Calu3 (cell line): ENCODE measurements at regions of chr17 and their contacts with region 1.

Region 1: DNA sequence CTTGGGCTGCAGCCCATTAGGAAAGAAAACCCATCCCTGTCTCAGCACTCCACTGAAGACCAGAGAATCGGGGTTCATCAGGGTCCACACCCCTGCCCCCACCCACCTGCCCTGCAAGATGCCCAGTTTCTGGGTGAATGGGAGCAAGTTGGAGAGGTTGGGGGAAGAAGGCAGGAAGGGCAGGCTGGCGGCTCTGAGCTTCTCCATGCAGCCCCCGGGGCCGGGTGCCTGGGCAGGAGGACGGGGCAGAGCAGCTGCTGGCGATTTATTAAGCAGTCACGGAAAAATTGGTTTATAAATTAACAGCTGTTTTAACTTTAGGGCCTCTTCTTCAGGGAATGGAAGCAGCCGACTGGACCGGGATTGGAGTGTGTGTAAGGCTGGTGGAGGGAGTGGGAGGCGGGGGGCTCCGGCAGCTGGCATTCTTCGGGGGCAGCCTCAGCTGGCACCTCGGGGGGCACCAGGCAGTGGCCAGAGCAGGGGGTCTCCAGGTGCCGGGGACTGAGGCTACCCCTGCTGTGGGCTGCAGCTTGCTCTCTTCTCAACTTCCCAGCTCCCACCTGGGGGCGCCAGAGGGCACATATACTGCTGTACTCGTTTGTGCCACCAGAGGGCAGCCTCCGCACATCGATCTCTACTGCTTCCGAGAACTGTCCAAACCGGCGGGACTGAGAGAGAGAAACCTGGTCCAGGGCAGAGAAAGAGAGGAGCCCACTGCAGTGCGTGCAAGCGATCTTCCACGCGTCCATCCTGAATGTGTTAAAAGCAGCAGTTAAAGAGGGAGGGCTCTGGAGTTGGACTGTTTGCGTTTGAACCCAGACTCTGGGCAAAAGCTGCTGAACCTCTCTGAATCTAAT is 5.0 kb upstream of the PPP1R1B start:
- DNase-seq: peak; percentile 100
- H3K4me3 Mint-ChIP-seq: peak overlapping the region; percentile 18
- H3K27ac Mint-ChIP-seq: peak overlapping the region; percentile 3
- H3K4me1 Mint-ChIP-seq: peaks cover 55% of the 10 kb centered on the region
- H3K27me3 Mint-ChIP-seq: peaks cover 83% of the 10 kb centered on the region
- CTCF ChIP-seq: no peak

Region 2: DNA sequence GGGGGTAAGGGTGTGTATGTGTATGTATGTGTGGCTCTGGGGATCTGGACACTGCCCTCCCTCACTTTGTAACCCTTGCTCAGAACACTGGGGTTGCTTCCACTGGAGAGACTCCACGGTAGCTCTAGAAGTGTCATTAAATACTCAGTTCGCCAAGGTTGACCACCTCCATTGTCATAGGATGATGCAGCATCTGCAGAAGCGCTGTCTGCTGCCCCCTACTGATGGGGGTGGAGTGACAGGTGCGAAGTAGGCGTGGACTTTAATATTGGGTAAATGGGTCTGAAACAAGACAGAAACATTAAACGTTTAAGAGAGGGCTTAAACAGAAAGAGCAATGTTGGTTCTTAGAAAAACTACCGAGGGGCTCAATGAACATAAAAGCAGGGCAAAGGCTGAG is 360.5 kb before region 1 on chr17:
- CTCF ChIA-PET with region 1: no interaction called
- intact Hi-C with region 1: no loop called
- DNase-seq: peak; percentile 70
- H3K4me3 Mint-ChIP-seq: no peak overlapping the region
- H3K27ac Mint-ChIP-seq: no peak overlapping the region
- H3K4me1 Mint-ChIP-seq: no peaks in the 10 kb centered on the region
- H3K27me3 Mint-ChIP-seq: no peaks in the 10 kb centered on the region
- CTCF ChIP-seq: peak; percentile 86

Region 3: DNA sequence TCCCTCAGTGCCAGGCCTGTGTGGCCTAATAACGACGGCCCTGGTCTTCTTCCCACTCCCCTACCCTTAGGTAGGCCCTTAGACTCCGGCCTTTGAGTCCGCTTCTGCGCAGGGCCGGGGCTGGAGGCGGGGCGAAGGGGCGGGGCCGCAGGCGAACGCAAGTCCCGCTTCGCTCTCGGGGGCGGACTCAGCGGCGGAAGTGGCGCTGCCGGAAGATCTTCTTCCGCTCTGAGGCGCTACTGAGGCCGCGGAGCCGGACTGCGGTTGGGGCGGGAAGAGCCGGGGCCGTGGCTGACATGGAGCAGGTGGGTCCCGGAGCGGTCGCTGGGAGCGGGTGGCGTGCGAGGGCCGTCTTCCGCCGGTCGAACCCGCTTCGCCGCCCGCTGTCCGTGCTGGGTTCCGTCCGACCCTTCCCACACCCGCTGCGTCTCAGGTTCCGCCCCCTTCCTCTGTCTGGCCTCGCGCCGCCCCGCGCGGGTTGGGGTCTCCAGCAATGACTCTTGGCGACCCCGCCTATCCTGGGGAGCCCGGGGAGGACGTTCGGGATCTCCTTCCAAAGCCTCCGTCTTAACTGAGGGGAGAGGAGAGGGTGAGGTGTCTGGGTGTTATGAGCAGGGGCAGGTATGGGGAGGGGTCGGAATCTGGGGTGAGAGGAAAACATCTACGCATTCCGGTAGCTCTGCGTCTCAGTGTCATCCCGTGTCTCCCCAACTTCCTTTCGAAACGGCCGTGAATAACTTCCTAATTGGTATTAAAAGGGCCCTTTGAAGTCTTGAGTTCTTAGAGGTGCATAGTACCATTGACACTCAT is 15.4 kb after region 1 on chr17 and contains the start of gene STARD3:
- CTCF ChIA-PET with region 1: interaction called, 42,089 read pairs
- intact Hi-C with region 1: loop called (anchors 1 kb)
- DNase-seq: no peak
- H3K4me3 Mint-ChIP-seq: peak within 1 kb of the TSS; percentile 71
- H3K27ac Mint-ChIP-seq: peak within 1 kb of the TSS; percentile 28
- H3K4me1 Mint-ChIP-seq: peaks cover 61% of the 10 kb centered on the region
- H3K27me3 Mint-ChIP-seq: peaks cover 5% of the 10 kb centered on the region
- CTCF ChIP-seq: no peak
- total RNA-seq, gene STARD3: 2,579 and 2,697 TPM in 2 replicates

Region 4: GRCh38 chr17:39769974-39770587 is 148.3 kb after region 1 on chr17:
- CTCF ChIA-PET with region 1: interaction called, 42,089 read pairs
- intact Hi-C with region 1: loop called (anchors 1 kb)
- DNase-seq: peak; percentile 100
- H3K4me3 Mint-ChIP-seq: peak overlapping the region; percentile 10
- H3K27ac Mint-ChIP-seq: peak overlapping the region; percentile 60
- H3K4me1 Mint-ChIP-seq: peaks cover 72% of the 10 kb centered on the region
- H3K27me3 Mint-ChIP-seq: peaks cover 13% of the 10 kb centered on the region
- CTCF ChIP-seq: no peak

Region 5: DNA sequence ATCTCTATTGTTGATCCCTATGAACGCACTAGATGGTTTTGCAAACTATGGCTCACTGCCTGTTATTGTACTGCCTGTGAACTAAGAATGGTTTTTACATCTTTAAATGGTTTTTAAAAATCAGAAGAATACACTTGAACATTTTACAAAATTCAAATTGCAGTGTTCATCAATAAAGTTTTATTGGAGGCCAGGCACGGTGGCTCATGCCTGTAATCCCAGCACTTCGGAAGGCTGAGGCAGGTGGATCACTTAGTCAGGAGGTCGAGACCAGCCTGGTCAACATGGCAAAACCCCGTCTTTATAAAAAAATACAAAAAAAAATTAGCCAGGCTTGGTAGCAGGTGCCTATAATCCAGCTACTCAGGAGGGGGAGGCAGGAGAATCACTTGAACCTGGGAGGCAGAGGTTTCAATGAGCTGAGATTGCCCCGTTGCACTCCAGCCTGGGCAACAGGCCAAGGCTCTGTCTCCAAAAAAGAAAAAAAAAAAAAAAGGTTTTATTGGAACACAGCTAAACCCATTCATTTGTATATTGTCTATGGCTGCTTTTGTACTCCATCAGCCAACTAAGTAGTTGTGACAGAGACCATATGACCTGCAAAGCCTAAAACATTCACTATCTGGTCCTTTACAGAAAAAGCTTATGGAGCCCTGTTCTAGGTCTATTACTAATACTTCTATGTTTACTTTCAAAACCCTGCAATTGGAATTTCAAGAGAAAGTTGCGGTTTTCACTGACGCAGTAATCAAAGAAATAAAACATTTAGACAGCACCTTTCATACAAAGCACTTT is 223.5 kb after region 1 on chr17:
- CTCF ChIA-PET with region 1: interaction called, 137 read pairs
- intact Hi-C with region 1: no loop called
- DNase-seq: peak; percentile 81
- H3K4me3 Mint-ChIP-seq: no peak overlapping the region
- H3K27ac Mint-ChIP-seq: no peak overlapping the region
- H3K4me1 Mint-ChIP-seq: peaks cover 10% of the 10 kb centered on the region
- H3K27me3 Mint-ChIP-seq: no peaks in the 10 kb centered on the region
- CTCF ChIP-seq: no peak

Region 6: DNA sequence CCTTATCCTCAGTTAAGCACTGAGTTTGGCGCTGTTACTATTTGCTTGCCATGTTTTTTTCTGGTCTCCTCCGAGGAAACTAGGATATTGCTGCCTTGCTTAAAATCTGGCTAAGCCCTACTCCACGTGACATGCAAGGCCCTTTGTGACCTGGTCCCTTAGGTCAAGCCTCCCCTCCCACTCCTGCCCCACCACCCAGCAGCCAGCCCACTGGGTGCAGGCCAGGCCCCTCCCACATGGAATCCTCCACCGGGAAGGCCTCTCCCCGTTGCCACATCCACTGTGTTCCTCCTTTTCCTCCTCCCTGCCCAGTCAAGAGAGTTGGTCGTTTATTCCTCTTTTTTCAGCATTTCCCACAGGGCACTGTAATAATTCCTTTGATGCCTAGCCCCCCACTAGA is 375.0 kb after region 1 on chr17:
- CTCF ChIA-PET with region 1: interaction called, 20 read pairs
- intact Hi-C with region 1: no loop called
- DNase-seq: no peak
- H3K4me3 Mint-ChIP-seq: no peak overlapping the region
- H3K27ac Mint-ChIP-seq: no peak overlapping the region
- H3K4me1 Mint-ChIP-seq: no peaks in the 10 kb centered on the region
- H3K27me3 Mint-ChIP-seq: no peaks in the 10 kb centered on the region
- CTCF ChIP-seq: no peak

Region 7: DNA sequence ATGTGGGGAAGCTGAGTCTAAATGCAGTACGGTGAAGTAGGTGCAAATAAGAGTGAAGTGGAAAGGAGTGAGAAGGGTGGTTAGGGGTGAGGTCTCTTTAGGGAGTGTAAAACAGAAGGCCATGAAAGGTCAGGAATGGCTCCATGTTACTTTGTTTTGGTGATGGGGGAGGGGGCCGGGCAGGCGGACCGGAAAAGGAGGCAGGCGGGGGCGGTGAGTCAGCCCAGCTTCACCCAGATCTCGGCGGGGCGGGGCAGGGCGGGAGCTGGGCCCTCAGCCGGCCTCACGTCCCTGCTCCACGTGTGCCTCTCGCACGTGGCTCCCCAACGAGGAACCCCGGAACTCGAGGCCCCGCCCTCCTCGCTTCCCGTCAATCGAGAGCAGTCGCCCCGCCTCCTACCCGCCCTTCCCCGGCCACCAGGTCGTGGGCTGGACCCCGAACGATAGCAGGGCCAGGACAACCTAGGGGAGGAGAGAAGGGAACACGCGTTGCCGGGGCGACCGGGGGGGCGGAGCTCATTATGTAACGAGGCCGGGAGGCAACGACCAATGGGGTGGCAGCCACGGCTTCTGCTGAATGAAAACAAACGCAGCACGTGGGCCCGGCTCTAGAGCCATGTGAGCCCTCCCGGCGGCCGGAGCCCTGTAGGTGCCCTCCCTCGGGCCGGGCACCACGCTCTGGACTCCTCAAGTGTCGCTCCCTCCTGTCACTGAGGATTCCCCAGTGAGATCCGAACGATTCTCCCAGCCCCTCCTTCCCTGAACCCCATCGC is 477.3 kb after region 1 on chr17:
- CTCF ChIA-PET with region 1: interaction called, 24 read pairs
- intact Hi-C with region 1: loop called (anchors 5 kb)
- DNase-seq: peak; percentile 100
- H3K4me3 Mint-ChIP-seq: peak overlapping the region; percentile 80
- H3K27ac Mint-ChIP-seq: peak overlapping the region; percentile 85
- H3K4me1 Mint-ChIP-seq: peaks cover 73% of the 10 kb centered on the region
- H3K27me3 Mint-ChIP-seq: no peaks in the 10 kb centered on the region
- CTCF ChIP-seq: no peak